Caco-2 (cell line): ENCODE measurements at regions of chr7 and their contacts with region 1.

Region 1: GRCh38 chr7:138738551-138739335 is 37.6 kb upstream of the SVOPL start:
- DNase-seq: peak; percentile 78 to 88
- H3K4me3 ChIP-seq: no peak overlapping the region
- H3K4me3 Mint-ChIP-seq: peak overlapping the region; percentile 9
- H3K27ac Mint-ChIP-seq: peak overlapping the region; percentile 43
- H3K4me1 ChIP-seq: peaks cover 6% of the 10 kb centered on the region; the same call in 1 of the 2 replicates
- H3K4me1 Mint-ChIP-seq: peaks cover 9% of the 10 kb centered on the region
- H3K27me3 ChIP-seq: no peaks in the 10 kb centered on the region
- H3K27me3 Mint-ChIP-seq: no peaks in the 10 kb centered on the region
- CTCF ChIP-seq: peak; percentile 91 to 92

Region 2: GRCh38 chr7:138002096-138002827 is 736.5 kb before region 1 on chr7:
- CTCF ChIA-PET with region 1: no interaction called
- POLR2A ChIA-PET with region 1: no interaction called
- intact Hi-C with region 1: loop called (anchors 2 kb)
- DNase-seq: peak; percentile 99
- H3K4me3 ChIP-seq: peak overlapping the region; percentile 100
- H3K4me3 Mint-ChIP-seq: peak overlapping the region; percentile 93
- H3K27ac Mint-ChIP-seq: peak overlapping the region; percentile 91
- H3K4me1 ChIP-seq: peaks cover 27% of the 10 kb centered on the region
- H3K4me1 Mint-ChIP-seq: peaks cover 16% of the 10 kb centered on the region
- H3K27me3 ChIP-seq: no peaks in the 10 kb centered on the region
- H3K27me3 Mint-ChIP-seq: no peaks in the 10 kb centered on the region
- CTCF ChIP-seq: peak; percentile 81 to 86

Region 3: DNA sequence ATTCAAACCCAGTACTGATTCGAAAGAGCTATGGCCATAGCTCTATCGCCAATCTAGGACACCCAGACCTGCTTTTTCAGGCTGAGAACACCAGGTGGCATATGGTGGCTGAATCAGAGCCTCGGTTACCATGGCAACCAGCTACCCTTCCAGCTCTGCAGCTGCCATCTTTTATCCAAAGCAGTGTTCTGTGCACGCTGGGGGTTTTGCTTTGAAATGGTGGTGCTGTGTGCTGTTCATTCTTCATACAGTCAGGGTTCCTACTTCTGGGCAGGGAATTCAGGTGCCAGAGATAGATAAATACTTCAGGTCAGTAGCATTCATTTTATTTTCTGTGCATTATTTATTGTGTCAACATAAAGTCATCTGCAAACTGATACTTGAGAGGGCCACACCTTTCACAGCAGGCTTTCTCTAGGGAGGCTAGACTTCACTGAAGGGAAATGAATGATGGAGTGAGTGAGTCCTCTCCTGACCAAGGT is 577.1 kb before region 1 on chr7:
- CTCF ChIA-PET with region 1: interaction called, 28 read pairs
- POLR2A ChIA-PET with region 1: no interaction called
- intact Hi-C with region 1: loop called (anchors 1 kb)
- DNase-seq: peak; percentile 83 to 92
- H3K4me3 ChIP-seq: no peak overlapping the region
- H3K4me3 Mint-ChIP-seq: no peak overlapping the region
- H3K27ac Mint-ChIP-seq: no peak overlapping the region
- H3K4me1 ChIP-seq: peaks cover 14% of the 10 kb centered on the region
- H3K4me1 Mint-ChIP-seq: peaks cover 12% of the 10 kb centered on the region
- H3K27me3 ChIP-seq: no peaks in the 10 kb centered on the region
- H3K27me3 Mint-ChIP-seq: no peaks in the 10 kb centered on the region
- CTCF ChIP-seq: peak; percentile 53 to 70

Region 4: DNA sequence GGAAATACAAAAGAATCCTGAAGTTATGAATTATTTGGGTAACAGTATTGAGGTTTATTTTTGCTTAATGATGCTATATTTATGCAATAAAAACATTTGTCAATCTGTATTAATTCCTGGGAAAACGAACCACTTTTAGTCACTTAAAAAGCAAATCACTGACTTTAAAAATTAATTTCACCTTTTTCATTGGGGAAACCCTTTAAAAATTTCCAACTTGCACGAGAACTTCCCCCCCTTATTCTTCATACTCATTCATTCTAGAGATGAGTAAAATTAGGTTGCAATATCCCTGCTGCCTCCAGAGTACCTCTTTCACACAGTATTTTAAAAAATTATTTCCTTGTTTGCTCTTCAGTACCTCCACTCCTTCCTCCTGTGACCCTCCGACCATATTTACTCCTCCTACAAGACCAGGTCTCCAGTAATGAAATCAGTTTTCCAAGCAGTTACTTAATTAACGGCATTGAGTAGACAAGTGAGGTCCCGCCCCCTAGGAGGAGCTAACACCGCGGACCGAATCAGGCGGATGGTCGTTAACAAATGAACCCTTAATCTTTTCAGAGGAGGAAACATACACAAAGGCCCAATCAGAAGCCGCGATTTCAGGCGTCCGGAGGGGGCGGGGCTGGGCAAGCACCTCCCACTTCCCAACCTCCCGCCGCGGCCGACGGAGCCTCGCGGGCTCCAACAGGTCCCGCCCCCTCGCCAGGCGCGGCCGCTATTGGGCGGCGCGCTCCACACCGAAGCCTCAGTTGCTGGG is 279.1 kb before region 1 on chr7:
- CTCF ChIA-PET with region 1: interaction called, 3 read pairs
- POLR2A ChIA-PET with region 1: no interaction called
- intact Hi-C with region 1: loop called (anchors 2 kb)
- DNase-seq: peak; percentile 98
- H3K4me3 ChIP-seq: peak overlapping the region; percentile 31
- H3K4me3 Mint-ChIP-seq: peak overlapping the region; percentile 79
- H3K27ac Mint-ChIP-seq: peak overlapping the region; percentile 22
- H3K4me1 ChIP-seq: peaks cover 22% of the 10 kb centered on the region
- H3K4me1 Mint-ChIP-seq: no peaks in the 10 kb centered on the region
- H3K27me3 ChIP-seq: no peaks in the 10 kb centered on the region
- H3K27me3 Mint-ChIP-seq: no peaks in the 10 kb centered on the region
- CTCF ChIP-seq: peak in 1 of 2 experiments; percentile 41

Region 5: DNA sequence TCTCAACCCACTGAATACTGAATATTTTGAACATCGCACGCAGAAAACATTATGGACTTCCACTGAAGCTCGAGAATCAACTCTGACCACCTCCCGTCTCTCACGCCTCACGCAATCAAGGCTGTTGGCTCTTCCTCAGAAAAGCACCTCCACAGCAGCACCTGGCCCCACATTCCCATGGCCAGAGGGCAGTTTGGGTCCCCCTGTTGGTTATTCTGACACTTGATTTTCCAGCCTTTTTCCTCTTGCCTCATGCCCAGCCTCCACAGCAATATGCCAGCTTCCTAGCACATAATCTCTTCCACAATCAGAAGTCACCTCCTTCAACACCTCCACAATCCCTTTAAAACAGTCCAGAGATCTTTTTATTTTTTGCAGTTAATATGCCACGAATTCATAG is 93.5 kb before region 1 on chr7:
- CTCF ChIA-PET with region 1: no interaction called
- POLR2A ChIA-PET with region 1: no interaction called
- intact Hi-C with region 1: loop called (anchors 1 kb)
- DNase-seq: peak in 1 of 2 experiments; percentile 29
- H3K4me3 ChIP-seq: no peak overlapping the region
- H3K4me3 Mint-ChIP-seq: no peak overlapping the region
- H3K27ac Mint-ChIP-seq: no peak overlapping the region
- H3K4me1 ChIP-seq: no peaks in the 10 kb centered on the region
- H3K4me1 Mint-ChIP-seq: no peaks in the 10 kb centered on the region
- H3K27me3 ChIP-seq: no peaks in the 10 kb centered on the region
- H3K27me3 Mint-ChIP-seq: no peaks in the 10 kb centered on the region
- CTCF ChIP-seq: no peak

Region 6: DNA sequence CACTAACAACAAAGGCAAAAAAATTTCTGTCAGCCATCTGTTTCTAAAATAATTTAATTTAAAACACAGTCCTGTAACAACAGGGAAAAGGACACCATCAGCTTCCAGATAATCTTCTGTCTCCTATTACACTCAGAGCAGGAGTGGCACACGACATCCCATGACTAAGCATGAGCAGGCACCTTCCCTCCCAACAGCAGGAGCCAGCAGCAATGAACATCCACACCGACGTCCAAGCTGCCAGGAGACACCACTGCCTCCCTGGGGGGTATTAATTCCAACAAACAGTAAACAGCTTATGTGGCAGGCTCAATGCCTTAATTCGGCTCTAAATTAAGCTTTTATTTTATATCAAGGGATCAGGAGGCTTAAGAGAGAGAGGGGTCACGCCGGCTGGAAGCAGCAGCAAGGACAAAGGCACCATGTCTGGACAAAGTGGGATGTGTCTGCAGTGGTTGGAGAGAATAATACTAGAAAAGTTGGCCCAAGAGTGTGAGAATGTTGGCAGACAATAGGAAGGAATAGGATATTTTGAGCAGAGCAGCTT is 196.8 kb after region 1 on chr7:
- CTCF ChIA-PET with region 1: no interaction called
- POLR2A ChIA-PET with region 1: no interaction called
- intact Hi-C with region 1: no loop called
- DNase-seq: no peak
- H3K4me3 ChIP-seq: no peak overlapping the region
- H3K4me3 Mint-ChIP-seq: no peak overlapping the region
- H3K27ac Mint-ChIP-seq: no peak overlapping the region
- H3K4me1 ChIP-seq: no peaks in the 10 kb centered on the region; the same call in 1 of the 2 replicates
- H3K4me1 Mint-ChIP-seq: peaks cover 25% of the 10 kb centered on the region
- H3K27me3 ChIP-seq: no peaks in the 10 kb centered on the region
- H3K27me3 Mint-ChIP-seq: no peaks in the 10 kb centered on the region
- CTCF ChIP-seq: no peak